AG04450 (cell line): ENCODE measurements at regions of chr6 and their contacts with region 1.

Region 1: GRCh38 chr6:79869600-79870084 is 77.7 kb downstream of the ELOVL4 start:
- DNase-seq: peak; percentile 21
- H3K4me3 ChIP-seq: peak overlapping the region; percentile 31
- H3K27ac ChIP-seq: no peak overlapping the region
- H3K27me3 ChIP-seq: no peaks in the 10 kb centered on the region
- CTCF ChIP-seq: peak; percentile 96

Region 2: DNA sequence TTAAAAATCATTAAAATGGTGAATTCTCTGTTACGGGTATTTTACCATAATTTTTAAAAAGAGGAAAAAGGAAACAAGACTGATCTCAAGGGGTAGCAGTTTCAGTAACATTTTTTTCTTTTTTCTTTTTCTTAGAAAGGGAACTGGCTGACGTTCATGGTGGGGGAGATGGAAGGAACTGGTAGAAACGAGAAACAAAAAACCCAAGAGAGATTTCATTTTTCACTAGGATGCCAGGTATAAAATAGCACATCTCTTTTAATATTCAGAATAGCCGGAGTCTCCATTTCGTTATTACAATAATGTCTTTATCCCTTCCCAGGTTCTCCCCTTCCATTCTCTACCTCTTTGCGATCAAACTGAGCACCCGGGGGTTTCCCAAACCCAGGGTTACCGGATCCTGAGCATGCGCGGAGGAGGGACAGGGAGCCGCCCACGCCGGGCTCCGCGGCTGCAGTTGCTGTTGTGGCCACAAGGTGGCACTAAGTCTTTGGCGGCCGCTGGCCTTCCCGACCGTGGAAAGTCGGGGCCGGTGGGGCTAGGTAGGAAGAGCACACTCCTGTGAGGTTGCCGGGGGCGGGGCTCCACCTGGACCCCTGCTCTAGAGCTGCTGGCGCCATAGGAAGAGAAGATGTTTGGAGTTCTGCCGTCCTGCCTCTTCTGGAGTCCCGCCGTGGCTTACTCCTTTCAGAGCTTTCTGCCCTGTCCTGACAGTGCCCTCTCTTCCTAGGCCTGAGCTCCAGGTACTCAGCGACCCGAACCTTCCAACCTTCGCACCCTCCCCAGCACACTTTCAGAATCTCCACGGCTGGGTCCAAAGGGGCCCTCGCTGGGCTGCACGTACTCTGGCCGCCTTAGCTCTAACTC is 91.7 kb before region 1 on chr6:
- CTCF ChIA-PET with region 1: interaction called, 34 read pairs
- POLR2A ChIA-PET with region 1: no interaction called
- DNase-seq: peak; percentile 8
- H3K4me3 ChIP-seq: peak overlapping the region; percentile 45
- H3K27ac ChIP-seq: no peak overlapping the region
- H3K27me3 ChIP-seq: no peaks in the 10 kb centered on the region
- CTCF ChIP-seq: peak; percentile 98

Region 3: GRCh38 chr6:79789843-79790242 is 79.8 kb before region 1 on chr6:
- CTCF ChIA-PET with region 1: interaction called, 15 read pairs
- POLR2A ChIA-PET with region 1: no interaction called
- DNase-seq: no peak
- H3K4me3 ChIP-seq: no peak overlapping the region
- H3K27ac ChIP-seq: no peak overlapping the region
- H3K27me3 ChIP-seq: no peaks in the 10 kb centered on the region
- CTCF ChIP-seq: no peak

Region 4: GRCh38 chr6:79888587-79888986 is 18.9 kb after region 1 on chr6:
- CTCF ChIA-PET with region 1: interaction called, 13 read pairs
- POLR2A ChIA-PET with region 1: no interaction called
- DNase-seq: no peak
- H3K4me3 ChIP-seq: no peak overlapping the region
- H3K27ac ChIP-seq: no peak overlapping the region
- H3K27me3 ChIP-seq: no peaks in the 10 kb centered on the region
- CTCF ChIP-seq: no peak

Region 5: DNA sequence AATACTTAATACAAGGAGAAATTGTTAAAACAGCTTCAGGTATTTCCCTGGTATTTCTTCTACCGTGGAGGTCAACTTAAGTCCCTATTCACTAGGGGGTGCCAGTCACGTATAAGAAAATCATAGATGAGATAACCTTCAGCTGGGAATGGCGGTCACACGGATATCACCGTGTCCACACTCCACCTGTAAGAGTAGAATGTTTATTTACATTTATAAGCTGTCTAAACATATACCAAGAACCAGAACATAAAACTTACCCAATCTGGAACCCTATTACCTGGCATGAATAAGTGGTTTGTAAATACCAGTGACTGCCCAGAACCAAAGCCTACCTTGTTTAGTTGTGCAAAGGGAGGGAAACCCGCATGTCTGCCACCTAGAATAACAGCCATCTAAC is 79.6 kb after region 1 on chr6:
- CTCF ChIA-PET with region 1: interaction called, 19 read pairs
- POLR2A ChIA-PET with region 1: no interaction called
- DNase-seq: peak; percentile 23
- H3K4me3 ChIP-seq: no peak overlapping the region
- H3K27ac ChIP-seq: no peak overlapping the region
- H3K27me3 ChIP-seq: peaks cover 6% of the 10 kb centered on the region
- CTCF ChIP-seq: peak; percentile 72